Heart right ventricle (tissue), 16 donors: ENCODE measurements at regions of chr13 and their contacts with region 1.

Region 1: DNA sequence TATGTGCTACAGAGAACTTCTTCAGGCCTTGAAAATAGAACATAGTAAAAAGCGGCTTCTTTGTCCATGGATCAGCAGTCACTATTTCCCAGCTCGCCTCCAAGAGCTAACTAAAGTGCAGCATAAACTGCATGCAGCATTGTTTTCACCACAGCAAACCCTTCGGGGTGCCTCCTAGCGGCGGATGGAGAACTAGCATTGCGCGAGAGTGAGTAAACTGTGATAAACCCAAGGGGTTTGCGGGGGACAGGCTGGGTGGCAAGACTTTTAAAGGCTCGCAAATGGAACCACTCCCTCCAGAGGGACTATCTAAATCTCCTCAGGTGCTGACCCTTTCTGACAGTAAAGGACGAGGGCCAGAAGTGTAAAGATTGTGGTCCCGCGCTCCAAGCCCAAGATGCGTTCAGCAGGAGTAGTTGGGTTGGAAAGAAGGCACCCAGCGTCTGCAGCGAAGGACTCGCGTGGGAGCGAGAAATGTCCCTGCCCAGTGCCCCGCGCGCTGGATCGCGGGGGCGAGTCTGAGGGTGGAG is 21.5 kb upstream of the SGCG start:
- DNase-seq: peak; percentile 33
- ATAC-seq: peak in 6 of 8 donors; percentile 61 to 80 (median 66)
- H3K4me3 ChIP-seq: peak overlapping the region in 9 of 10 donors; percentile 11 to 53 (median 49)
- H3K27ac ChIP-seq: no peak overlapping the region
- H3K4me1 ChIP-seq: peaks cover 0 to 8% (median 0%) of the 10 kb centered on the region in 9 donors
- H3K27me3 ChIP-seq: peaks cover 0 to 33% (median 21%) of the 10 kb centered on the region in 7 donors
- CTCF ChIP-seq: peak; percentile 17 to 71 (median 57)

Region 2: DNA sequence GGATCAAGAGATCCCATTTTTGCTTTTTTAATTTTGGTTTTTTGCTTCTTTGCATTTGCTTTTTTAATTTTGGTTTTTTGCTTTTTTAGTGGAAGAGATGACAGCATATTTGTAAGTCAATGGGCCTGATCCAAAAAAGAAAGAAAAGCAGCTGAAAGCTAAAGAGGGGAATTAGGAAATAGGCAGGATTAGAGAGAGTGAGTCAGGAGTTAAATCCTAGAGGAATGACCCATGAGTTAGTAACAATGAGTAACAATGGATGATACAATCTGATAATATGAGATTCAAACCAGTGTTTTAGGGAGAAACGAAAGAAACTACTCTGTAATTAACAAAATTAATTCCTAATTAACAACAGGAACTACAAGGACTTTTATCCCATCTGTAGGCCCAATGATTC is 89.7 kb before region 1 on chr13:
- intact Hi-C with region 1: loop called in 1 of 10 experiments (anchors 5 kb)
- DNase-seq: no peak
- ATAC-seq: peak in 1 of 8 donors; percentile 79
- H3K4me3 ChIP-seq: no peak overlapping the region
- H3K27ac ChIP-seq: peak overlapping the region in 1 of 10 donors; percentile 50
- H3K4me1 ChIP-seq: no peaks in the 10 kb centered on the region
- H3K27me3 ChIP-seq: no peaks in the 10 kb centered on the region
- CTCF ChIP-seq: no peak

Region 3: GRCh38 chr13:23202383-23202782 is 43.1 kb after region 1 on chr13:
- intact Hi-C with region 1: no loop called
- DNase-seq: no peak
- ATAC-seq: no peak
- H3K4me3 ChIP-seq: no peak overlapping the region
- H3K27ac ChIP-seq: no peak overlapping the region
- H3K4me1 ChIP-seq: peaks cover 0 to 9% (median 0%) of the 10 kb centered on the region in 9 donors
- H3K27me3 ChIP-seq: no peaks in the 10 kb centered on the region
- CTCF ChIP-seq: no peak

Region 4: GRCh38 chr13:23531446-23531845 is 372.2 kb after region 1 on chr13:
- intact Hi-C with region 1: no loop called
- DNase-seq: no peak
- ATAC-seq: peak in 1 of 8 donors; percentile 34
- H3K4me3 ChIP-seq: no peak overlapping the region
- H3K27ac ChIP-seq: no peak overlapping the region
- H3K4me1 ChIP-seq: no peaks in the 10 kb centered on the region
- H3K27me3 ChIP-seq: no peaks in the 10 kb centered on the region
- CTCF ChIP-seq: no peak